ENCODE measurements at regions of chr4 and their contacts with region 1.

Region 1: DNA sequence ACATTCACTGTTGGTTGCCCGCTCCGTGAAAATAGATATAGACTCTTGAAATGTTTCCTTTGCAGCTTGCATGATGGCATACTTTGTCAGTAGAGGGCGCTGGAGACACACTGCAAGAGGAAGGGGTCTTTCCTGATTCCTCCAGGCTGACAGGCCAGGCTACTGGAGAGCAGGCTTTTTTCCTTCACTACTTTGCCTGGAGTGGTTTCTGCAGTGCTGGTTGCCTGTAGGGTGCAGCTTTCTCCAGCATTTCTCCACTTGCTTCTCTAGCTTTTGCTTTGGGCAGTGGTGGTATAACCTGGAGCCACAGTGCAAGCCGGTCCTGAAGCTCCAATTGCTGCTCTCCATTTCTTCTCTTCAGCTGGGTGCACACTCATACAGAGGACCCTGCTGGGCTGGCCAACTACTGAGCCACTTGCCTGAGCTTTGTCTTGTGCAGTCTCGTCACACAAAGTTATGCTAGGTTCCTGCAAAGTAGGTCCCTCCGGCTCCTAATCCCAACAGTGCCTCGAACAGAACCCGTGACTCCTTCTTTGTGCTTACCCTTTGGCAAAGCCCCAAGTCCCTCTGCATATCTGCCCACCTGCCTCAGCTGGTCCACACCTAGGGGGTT is 46.3 kb downstream of the RASSF6 start:
- DNase-seq: peak; percentile 51
- ATAC-seq: peak; percentile 91
- H3K4me3 ChIP-seq: no peak overlapping the region
- H3K27ac ChIP-seq: no peak overlapping the region
- H3K4me1 ChIP-seq: no peaks in the 10 kb centered on the region; the same call in 1 of the 2 replicates
- H3K27me3 ChIP-seq: no peaks in the 10 kb centered on the region
- CTCF ChIP-seq: peak; percentile 93 to 96 (median 93)
- EP300 ChIP-seq: no peak
- POLR2A ChIP-seq: no peak
- RAD21 ChIP-seq: peak; percentile 97

Region 2: GRCh38 chr4:73308286-73308685 is 265.6 kb before region 1 on chr4:
- CTCF ChIA-PET with region 1: interaction called, 4 read pairs
- POLR2A ChIA-PET with region 1: no interaction called
- RAD21 ChIA-PET with region 1: interaction called, 3 read pairs
- SMC1A ChIA-PET with region 1: interaction called, 10 read pairs
- in situ Hi-C with region 1: no loop called
- intact Hi-C with region 1: loop called (anchors 10 kb)
- DNase-seq: no peak
- ATAC-seq: peak; percentile 57
- H3K4me3 ChIP-seq: no peak overlapping the region
- H3K27ac ChIP-seq: no peak overlapping the region
- H3K4me1 ChIP-seq: no peaks in the 10 kb centered on the region
- H3K27me3 ChIP-seq: no peaks in the 10 kb centered on the region
- CTCF ChIP-seq: peak; percentile 29 to 54 (median 32); a peak in 4 of 6 replicates
- EP300 ChIP-seq: no peak
- POLR2A ChIP-seq: no peak
- RAD21 ChIP-seq: peak; percentile 78

Region 3: GRCh38 chr4:73539386-73539785 is 34.5 kb before region 1 on chr4:
- CTCF ChIA-PET with region 1: interaction called, 5 read pairs
- POLR2A ChIA-PET with region 1: no interaction called
- RAD21 ChIA-PET with region 1: interaction called, 3 read pairs
- SMC1A ChIA-PET with region 1: interaction called, 24 read pairs
- in situ Hi-C with region 1: no loop called
- intact Hi-C with region 1: no loop called
- DNase-seq: no peak
- ATAC-seq: no peak
- H3K4me3 ChIP-seq: no peak overlapping the region
- H3K27ac ChIP-seq: no peak overlapping the region
- H3K4me1 ChIP-seq: peaks cover 5% of the 10 kb centered on the region; the same call in 1 of the 2 replicates
- H3K27me3 ChIP-seq: no peaks in the 10 kb centered on the region
- CTCF ChIP-seq: no peak
- EP300 ChIP-seq: no peak
- POLR2A ChIP-seq: no peak
- RAD21 ChIP-seq: no peak

Region 4: GRCh38 chr4:73648478-73648877 is 74.6 kb after region 1 on chr4:
- CTCF ChIA-PET with region 1: interaction called, 361 read pairs
- POLR2A ChIA-PET with region 1: interaction called, 5 read pairs
- RAD21 ChIA-PET with region 1: interaction called, 311 read pairs
- SMC1A ChIA-PET with region 1: interaction called, 302 read pairs
- in situ Hi-C with region 1: no loop called
- intact Hi-C with region 1: loop called (anchors 1 kb)
- DNase-seq: no peak
- ATAC-seq: no peak
- H3K4me3 ChIP-seq: no peak overlapping the region
- H3K27ac ChIP-seq: no peak overlapping the region
- H3K4me1 ChIP-seq: no peaks in the 10 kb centered on the region
- H3K27me3 ChIP-seq: no peaks in the 10 kb centered on the region
- CTCF ChIP-seq: no peak
- EP300 ChIP-seq: no peak
- POLR2A ChIP-seq: no peak
- RAD21 ChIP-seq: no peak

Region 5: GRCh38 chr4:73668782-73669201 is 94.9 kb after region 1 on chr4:
- CTCF ChIA-PET with region 1: interaction called, 120 read pairs
- POLR2A ChIA-PET with region 1: interaction called, 4 read pairs
- RAD21 ChIA-PET with region 1: interaction called, 311 read pairs
- SMC1A ChIA-PET with region 1: interaction called, 112 read pairs
- in situ Hi-C with region 1: no loop called
- intact Hi-C with region 1: no loop called
- DNase-seq: no peak
- ATAC-seq: peak; percentile 64
- H3K4me3 ChIP-seq: no peak overlapping the region
- H3K27ac ChIP-seq: no peak overlapping the region
- H3K4me1 ChIP-seq: no peaks in the 10 kb centered on the region
- H3K27me3 ChIP-seq: no peaks in the 10 kb centered on the region
- CTCF ChIP-seq: no peak
- EP300 ChIP-seq: no peak
- POLR2A ChIP-seq: no peak
- RAD21 ChIP-seq: no peak

Region 6: DNA sequence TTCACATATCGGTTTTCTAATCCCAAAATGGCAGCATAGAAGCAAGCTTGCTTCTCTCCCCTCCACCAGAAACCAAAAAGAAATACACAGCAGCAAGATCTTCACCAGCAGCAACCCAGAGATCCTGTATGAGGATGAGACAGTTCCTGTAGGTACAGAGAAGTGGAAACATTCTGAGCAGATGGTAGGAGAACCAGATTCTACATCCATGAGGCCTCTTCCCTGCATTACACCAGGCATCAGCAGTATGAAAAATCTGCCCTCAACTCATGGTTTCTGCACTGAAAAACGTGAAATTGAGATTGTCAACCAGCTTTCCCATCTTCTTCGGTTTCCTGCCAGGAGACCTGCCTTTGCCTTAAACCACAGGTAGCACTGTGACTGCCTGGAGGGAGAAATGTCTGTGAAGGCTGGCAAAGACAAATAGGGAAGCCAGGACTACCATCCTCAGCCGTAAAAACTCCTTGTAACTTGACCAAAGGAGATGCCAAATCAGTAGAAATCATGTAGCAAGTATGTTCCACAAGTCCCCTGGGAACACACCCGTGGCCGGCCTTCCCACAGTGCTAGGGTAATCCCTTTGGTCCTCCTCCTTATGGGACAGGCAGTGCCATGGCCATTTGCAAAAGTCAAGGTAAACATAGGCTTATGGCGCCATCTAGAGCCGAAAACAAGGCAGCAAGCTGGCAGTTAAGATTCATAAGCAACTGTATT is 560.0 kb after region 1 on chr4:
- CTCF ChIA-PET with region 1: interaction called, 23 read pairs
- POLR2A ChIA-PET with region 1: no interaction called
- RAD21 ChIA-PET with region 1: interaction called, 14 read pairs
- SMC1A ChIA-PET with region 1: interaction called, 10 read pairs
- in situ Hi-C with region 1: loop called (anchors 25 kb)
- intact Hi-C with region 1: loop called (anchors 1 kb)
- DNase-seq: peak; percentile 20
- ATAC-seq: peak; percentile 89
- H3K4me3 ChIP-seq: no peak overlapping the region
- H3K27ac ChIP-seq: no peak overlapping the region
- H3K4me1 ChIP-seq: no peaks in the 10 kb centered on the region
- H3K27me3 ChIP-seq: peaks cover 0 to 4% of the 10 kb centered on the region in 2 experiments; a peak in 1 of 4 replicates
- CTCF ChIP-seq: peak; percentile 69 to 86 (median 75)
- EP300 ChIP-seq: no peak
- POLR2A ChIP-seq: no peak
- RAD21 ChIP-seq: peak; percentile 86